ENCODE measurements at regions of chr14 and their contacts with region 1.

Region 1: DNA sequence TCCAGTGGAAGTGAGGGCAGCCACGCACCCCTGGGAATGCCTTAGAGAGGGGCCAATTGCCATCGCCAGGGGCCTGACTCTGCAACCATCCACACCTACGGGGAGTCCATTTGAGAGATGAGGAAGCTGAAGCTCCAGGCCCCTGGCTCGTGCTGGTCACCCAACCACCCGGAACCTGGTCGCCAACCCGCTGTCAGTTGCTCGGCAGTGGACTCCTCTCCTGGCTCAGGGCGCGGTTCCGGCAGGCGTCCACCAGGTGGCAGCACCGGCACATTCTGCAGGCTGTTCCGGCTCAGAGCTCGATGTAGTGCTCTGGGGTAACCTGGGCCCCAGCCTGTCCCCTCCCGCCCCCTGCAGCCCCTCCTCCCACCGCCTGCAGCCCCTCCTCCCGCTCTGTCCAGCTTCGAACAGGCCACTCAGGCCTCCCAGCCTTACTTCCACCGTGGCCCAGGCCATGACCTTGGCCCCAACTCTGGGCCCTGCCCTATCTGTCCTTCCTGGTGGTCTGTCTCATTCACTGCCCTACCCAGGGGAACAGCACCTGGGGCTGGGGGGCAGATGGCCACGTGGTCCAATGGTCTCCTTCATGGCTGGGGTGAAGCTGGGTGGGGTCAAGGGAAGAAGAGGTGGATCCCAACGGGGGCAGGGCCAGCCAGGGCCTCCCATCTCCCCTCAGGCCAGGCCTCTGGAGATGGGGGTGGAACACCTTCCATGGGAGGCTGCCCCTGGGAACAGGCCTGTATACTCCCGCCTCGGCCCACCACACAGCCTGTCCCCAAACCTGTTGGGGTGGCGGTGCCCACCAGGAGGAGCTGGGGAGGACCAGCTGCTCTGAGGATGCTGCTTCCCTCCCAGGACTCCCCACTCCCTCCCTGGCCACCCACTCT is 15.7 kb downstream of the SIVA1 start:
- DNase-seq: peak; percentile 88
- ATAC-seq: peak; percentile 88 to 93

Region 2: GRCh38 chr14:104820669-104821228 is 52.1 kb after region 1 on chr14:
- intact Hi-C with region 1: loop called (anchors 2 to 5 kb)
- DNase-seq: peak; percentile 63
- ATAC-seq: peak; percentile 22 to 33

Region 3: DNA sequence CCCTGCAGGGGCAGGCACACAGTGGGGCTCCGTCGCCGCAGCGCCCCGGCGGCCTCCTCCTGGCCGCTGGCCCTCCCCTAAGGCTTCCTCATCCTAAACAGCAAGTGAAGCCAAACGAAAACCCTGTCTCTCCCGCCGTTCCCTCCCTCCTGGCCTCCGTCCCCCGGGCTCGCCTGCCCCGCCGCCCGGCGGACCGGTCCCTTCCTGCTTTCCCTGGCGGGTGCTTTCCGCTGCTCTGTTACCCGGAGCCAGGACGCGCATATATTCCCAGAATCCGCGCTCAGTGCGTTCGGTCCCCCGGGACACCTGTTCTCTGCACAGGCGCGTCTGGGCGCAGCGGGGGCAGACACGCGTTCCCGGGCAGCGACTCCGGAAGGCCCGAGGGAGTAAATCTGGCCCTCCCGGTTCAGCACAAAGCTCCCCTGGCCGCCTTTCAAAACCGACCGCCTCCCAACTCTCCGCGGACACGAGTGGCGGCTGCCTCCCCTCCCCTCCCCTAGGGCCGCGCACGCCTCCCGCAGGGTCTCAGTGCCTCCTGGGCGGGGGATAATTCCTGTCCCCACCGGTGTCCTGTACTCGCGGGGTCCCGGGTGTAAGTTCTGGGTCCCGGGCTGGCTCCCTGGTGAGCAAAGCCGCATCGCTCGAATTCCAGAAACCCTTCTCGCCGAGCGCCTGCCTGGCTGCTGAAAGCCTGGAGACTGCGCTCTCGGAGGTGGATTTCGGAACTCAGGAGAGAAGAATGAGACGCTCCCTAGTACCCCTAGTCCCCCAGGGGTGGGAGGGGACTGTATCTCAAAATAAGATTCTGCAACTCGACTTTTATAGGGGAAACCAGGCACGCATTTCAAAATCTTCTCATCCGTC is 75.0 kb after region 1 on chr14:
- intact Hi-C with region 1: no loop called
- DNase-seq: no peak
- ATAC-seq: peak; percentile 56 to 69

Measured in left cardiac atrium (tissue), 4 donors.